Right lobe of liver (tissue), 6 donors: ENCODE measurements at regions of chr19 and their contacts with region 1.

Region 1: DNA sequence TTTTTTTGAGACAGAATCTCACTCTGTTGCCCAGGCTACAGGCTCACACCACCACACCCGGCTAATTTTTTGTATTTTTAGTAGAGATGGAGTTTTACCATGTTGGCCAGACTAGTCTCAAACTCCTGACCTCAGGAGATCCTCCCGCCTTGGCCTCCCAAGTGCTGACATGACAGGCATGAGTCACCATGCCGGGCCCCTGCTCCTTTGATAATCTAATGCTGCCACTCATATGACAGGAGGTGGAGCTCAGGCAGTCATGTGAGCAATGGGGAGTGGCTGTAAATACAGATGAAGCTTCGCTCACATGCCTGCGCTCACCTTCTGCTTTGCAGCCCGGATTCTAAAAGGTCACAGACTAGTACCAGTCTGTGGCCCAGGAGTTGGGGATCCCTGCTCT is 25.1 kb downstream of the ARHGEF18 start:
- DNase-seq: no peak
- ATAC-seq: no peak
- H3K4me3 ChIP-seq: no peak overlapping the region
- H3K27ac ChIP-seq: no peak overlapping the region
- H3K4me1 ChIP-seq: no peaks in the 10 kb centered on the region
- H3K27me3 ChIP-seq: no peaks in the 10 kb centered on the region
- CTCF ChIP-seq: no peak
- POLR2A ChIP-seq: no peak

Region 2: GRCh38 chr19:7535035-7535992 is 161.5 kb after region 1 on chr19 and contains the start of gene PNPLA6:
- intact Hi-C with region 1: loop called in 1 of 2 experiments (anchors 10 kb)
- DNase-seq: peak; percentile 97 to 98 (median 98)
- ATAC-seq: peak; percentile 86 to 88 (median 86)
- H3K4me3 ChIP-seq: peak within 1 kb of the TSS; percentile 80 to 92 (median 83)
- H3K27ac ChIP-seq: peak within 1 kb of the TSS; percentile 66 to 90 (median 84)
- H3K4me1 ChIP-seq: peaks cover 0 to 10% (median 0%) of the 10 kb centered on the region in 4 donors
- H3K27me3 ChIP-seq: no peaks in the 10 kb centered on the region
- CTCF ChIP-seq: no peak
- POLR2A ChIP-seq: peak; percentile 68
- total RNA-seq, gene PNPLA6: 38.7 to 61.8 (median 46.5) TPM